Activated naive CD4-positive, alpha-beta T cell treated with anti-CD3 and anti-CD28 coated beads for 36 hours (primary cell): ENCODE measurements at regions of chrX and their contacts with region 1.

Region 1: GRCh38 chrX:70470850-70471289 is 26.2 kb downstream of the DLG3 start:
- DNase-seq: no peak
- H3K4me3 Mint-ChIP-seq: no peak overlapping the region
- H3K27ac Mint-ChIP-seq: no peak overlapping the region
- H3K4me1 Mint-ChIP-seq: peaks cover 11% of the 10 kb centered on the region
- H3K27me3 Mint-ChIP-seq: no peaks in the 10 kb centered on the region

Region 2: DNA sequence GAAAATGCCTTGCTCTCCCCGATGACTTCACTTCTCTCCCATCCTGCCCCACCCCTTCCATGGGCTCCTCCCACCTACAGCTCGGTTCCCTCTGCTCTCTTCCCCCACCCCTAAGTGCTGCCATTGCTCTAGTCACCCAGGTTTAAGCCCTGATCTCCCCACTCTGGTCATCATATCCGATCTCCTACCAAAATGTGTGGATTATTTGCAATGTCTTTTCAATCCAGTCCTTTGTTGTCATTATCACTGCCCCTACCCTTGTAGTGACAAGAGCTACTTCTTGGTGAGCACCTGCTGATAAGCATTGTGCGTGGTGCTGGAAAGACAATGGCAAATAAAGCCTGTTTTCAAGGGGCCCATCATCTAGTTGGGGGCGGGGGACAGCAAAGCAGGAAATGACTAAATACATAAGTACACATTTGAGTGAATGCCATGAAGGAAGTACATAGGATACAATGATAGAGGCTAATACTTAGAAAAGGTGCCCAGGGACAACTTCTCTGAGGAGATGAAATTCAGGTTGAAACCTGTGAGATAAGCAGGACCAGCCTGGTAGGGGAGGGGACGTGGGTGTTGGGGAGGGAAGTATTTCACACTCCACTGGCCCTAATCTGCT is 37.5 kb after region 1 on chrX:
- CTCF ChIA-PET with region 1: no interaction called
- intact Hi-C with region 1: loop called (anchors 5 kb)
- DNase-seq: peak; percentile 12
- H3K4me3 Mint-ChIP-seq: no peak overlapping the region
- H3K27ac Mint-ChIP-seq: no peak overlapping the region
- H3K4me1 Mint-ChIP-seq: peaks cover 13% of the 10 kb centered on the region
- H3K27me3 Mint-ChIP-seq: peaks cover 5% of the 10 kb centered on the region